Activated naive CD4-positive, alpha-beta T cell treated with anti-CD3 and anti-CD28 coated beads for 36 hours (primary cell): ENCODE measurements at regions of chr14 and their contacts with region 1.

Region 1: GRCh38 chr14:24710403-24711112 is 76.6 kb upstream of the GZMB start:
- DNase-seq: peak; percentile 77
- H3K4me3 Mint-ChIP-seq: no peak overlapping the region
- H3K27ac Mint-ChIP-seq: no peak overlapping the region
- H3K4me1 Mint-ChIP-seq: no peaks in the 10 kb centered on the region
- H3K27me3 Mint-ChIP-seq: no peaks in the 10 kb centered on the region

Region 2: GRCh38 chr14:24699052-24699451 is 11.5 kb before region 1 on chr14:
- CTCF ChIA-PET with region 1: interaction called, 26 read pairs
- intact Hi-C with region 1: no loop called
- DNase-seq: no peak
- H3K4me3 Mint-ChIP-seq: no peak overlapping the region
- H3K27ac Mint-ChIP-seq: no peak overlapping the region
- H3K4me1 Mint-ChIP-seq: peaks cover 2% of the 10 kb centered on the region
- H3K27me3 Mint-ChIP-seq: no peaks in the 10 kb centered on the region

Region 3: GRCh38 chr14:24734878-24735500 is 24.4 kb after region 1 on chr14:
- CTCF ChIA-PET with region 1: interaction called, 11 read pairs
- intact Hi-C with region 1: no loop called
- DNase-seq: peak; percentile 45
- H3K4me3 Mint-ChIP-seq: no peak overlapping the region
- H3K27ac Mint-ChIP-seq: no peak overlapping the region
- H3K4me1 Mint-ChIP-seq: no peaks in the 10 kb centered on the region
- H3K27me3 Mint-ChIP-seq: peaks cover 7% of the 10 kb centered on the region

Region 4: DNA sequence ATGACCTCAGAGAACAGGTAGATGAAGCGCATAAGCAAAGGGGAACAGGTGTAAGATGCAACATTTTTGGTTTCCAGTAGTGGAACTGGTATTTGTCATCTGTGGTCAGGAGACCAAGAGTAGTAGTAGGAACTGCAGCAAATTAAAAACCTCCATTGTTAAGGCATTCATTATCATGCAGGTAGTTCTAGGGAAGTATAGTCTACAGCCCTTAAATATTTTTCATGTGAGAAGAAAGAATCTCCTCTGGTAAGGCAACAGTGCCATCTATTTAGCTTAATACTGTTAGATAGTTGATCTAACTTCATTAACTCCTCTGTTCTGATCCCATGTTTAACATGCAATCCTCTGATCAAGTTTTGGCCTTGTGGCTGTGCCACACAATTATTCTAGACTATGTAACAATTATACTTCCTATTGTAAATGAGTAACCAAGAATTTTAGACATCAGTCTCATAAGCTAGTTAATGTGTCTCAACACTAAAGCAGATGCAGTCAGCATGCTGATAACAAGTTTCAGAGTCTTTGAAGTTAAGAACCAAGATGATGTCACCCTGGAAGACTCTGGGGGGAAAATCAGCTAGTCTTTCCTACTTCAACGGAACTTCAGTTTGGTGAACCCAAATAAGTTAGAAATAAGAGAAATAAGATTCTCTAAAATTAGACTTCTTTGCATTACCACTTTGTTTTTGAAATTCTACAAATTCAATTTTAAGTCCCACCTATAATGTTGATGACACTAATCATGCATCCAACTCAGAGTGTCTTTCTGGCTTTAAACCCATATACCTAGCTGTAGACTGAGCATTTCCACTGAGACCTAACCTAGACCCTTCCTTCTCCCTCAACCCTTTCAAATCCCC is 268.5 kb after region 1 on chr14:
- CTCF ChIA-PET with region 1: no interaction called
- intact Hi-C with region 1: no loop called
- DNase-seq: no peak
- H3K4me3 Mint-ChIP-seq: no peak overlapping the region
- H3K27ac Mint-ChIP-seq: no peak overlapping the region
- H3K4me1 Mint-ChIP-seq: no peaks in the 10 kb centered on the region
- H3K27me3 Mint-ChIP-seq: peaks cover 2% of the 10 kb centered on the region

Region 5: GRCh38 chr14:25132732-25133422 is 422.3 kb after region 1 on chr14:
- CTCF ChIA-PET with region 1: interaction called, 6 read pairs
- intact Hi-C with region 1: loop called (anchors 1 kb)
- DNase-seq: peak; percentile 60
- H3K4me3 Mint-ChIP-seq: no peak overlapping the region
- H3K27ac Mint-ChIP-seq: peak overlapping the region; percentile 48
- H3K4me1 Mint-ChIP-seq: peaks cover 3% of the 10 kb centered on the region
- H3K27me3 Mint-ChIP-seq: peaks cover 28% of the 10 kb centered on the region